Endothelial cell of umbilical vein (primary cell): ENCODE measurements at regions of chr1 and their contacts with region 1.

Region 1: GRCh38 chr1:234722904-234723720 is 113.1 kb upstream of the IRF2BP2 start:
- DNase-seq: peak; percentile 21
- H3K4me3 ChIP-seq: peak overlapping the region in 1 of 3 experiments; percentile 8
- H3K27ac ChIP-seq: peak overlapping the region; percentile 91
- H3K4me1 ChIP-seq: peaks cover 82% of the 10 kb centered on the region
- H3K27me3 ChIP-seq: no peaks in the 10 kb centered on the region
- CTCF ChIP-seq: no peak
- POLR2A ChIP-seq: no peak

Region 2: GRCh38 chr1:234373959-234374254 is 349.2 kb before region 1 on chr1:
- CTCF ChIA-PET with region 1: no interaction called
- POLR2A ChIA-PET with region 1: no interaction called
- dilution Hi-C with region 1: no loop called
- intact Hi-C with region 1: no loop called
- DNase-seq: no peak
- H3K4me3 ChIP-seq: peak overlapping the region; percentile 83 to 86 (median 85)
- H3K27ac ChIP-seq: peak overlapping the region; percentile 86
- H3K4me1 ChIP-seq: peaks cover 16% of the 10 kb centered on the region
- H3K27me3 ChIP-seq: no peaks in the 10 kb centered on the region
- CTCF ChIP-seq: no peak
- POLR2A ChIP-seq: no peak

Region 3: GRCh38 chr1:234544087-234544579 is 179.0 kb before region 1 on chr1:
- CTCF ChIA-PET with region 1: no interaction called
- POLR2A ChIA-PET with region 1: no interaction called
- dilution Hi-C with region 1: no loop called
- intact Hi-C with region 1: loop called (anchors 2 kb)
- DNase-seq: peak; percentile 98
- H3K4me3 ChIP-seq: no peak overlapping the region
- H3K27ac ChIP-seq: peak overlapping the region; percentile 72
- H3K4me1 ChIP-seq: peaks cover 24% of the 10 kb centered on the region
- H3K27me3 ChIP-seq: no peaks in the 10 kb centered on the region
- CTCF ChIP-seq: no peak
- POLR2A ChIP-seq: no peak

Region 4: DNA sequence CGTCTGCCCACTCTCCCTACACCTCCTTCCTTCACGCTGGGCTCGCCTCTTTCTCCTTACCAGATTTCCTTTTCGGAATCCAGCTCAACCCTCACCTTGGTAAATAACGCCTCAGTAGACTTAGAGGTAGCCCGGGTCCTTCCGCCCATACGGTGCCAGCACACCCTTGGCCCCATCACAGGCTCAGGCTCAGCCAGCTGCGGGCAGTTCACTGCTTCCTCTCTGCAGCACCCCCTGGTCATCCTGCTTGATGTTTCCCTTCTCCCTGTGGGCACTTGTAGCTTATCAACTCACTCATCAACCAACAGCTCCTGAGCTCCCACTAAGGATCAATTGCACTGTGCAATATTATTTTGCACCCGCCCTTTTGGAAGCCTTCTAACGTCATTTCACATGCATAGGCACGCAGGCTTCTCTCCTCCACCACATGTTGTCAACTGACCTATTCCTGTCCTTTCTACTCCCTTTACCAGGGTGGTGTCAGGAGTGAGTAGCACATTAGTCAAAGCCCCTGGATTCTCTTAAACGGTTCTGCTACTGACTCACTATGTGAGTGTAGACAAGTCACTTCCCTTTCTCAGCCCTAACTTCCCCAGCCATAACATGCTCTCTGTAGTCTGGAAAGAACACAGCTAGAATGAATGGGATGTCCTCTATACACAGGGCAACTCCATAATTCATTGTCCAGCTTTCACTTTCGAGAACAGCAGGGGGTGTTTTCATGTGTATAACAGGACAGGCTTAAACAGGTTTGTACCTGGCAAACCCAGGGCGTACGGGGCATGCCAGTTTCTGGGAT is 66.1 kb before region 1 on chr1:
- CTCF ChIA-PET with region 1: interaction called, 8 read pairs
- POLR2A ChIA-PET with region 1: interaction called, 3 read pairs
- dilution Hi-C with region 1: no loop called
- intact Hi-C with region 1: loop called (anchors 1 kb)
- DNase-seq: peak; percentile 92
- H3K4me3 ChIP-seq: no peak overlapping the region
- H3K27ac ChIP-seq: peak overlapping the region; percentile 82
- H3K4me1 ChIP-seq: peaks cover 33% of the 10 kb centered on the region
- H3K27me3 ChIP-seq: no peaks in the 10 kb centered on the region
- CTCF ChIP-seq: no peak
- POLR2A ChIP-seq: no peak

Region 5: GRCh38 chr1:234862944-234863515 is 139.9 kb after region 1 on chr1:
- CTCF ChIA-PET with region 1: interaction called, 4 read pairs
- POLR2A ChIA-PET with region 1: interaction called, 3 read pairs
- dilution Hi-C with region 1: no loop called
- intact Hi-C with region 1: loop called (anchors 1 kb)
- DNase-seq: peak; percentile 96
- H3K4me3 ChIP-seq: no peak overlapping the region
- H3K27ac ChIP-seq: peak overlapping the region; percentile 85
- H3K4me1 ChIP-seq: peaks cover 46% of the 10 kb centered on the region
- H3K27me3 ChIP-seq: no peaks in the 10 kb centered on the region
- CTCF ChIP-seq: no peak
- POLR2A ChIP-seq: no peak

Region 6: GRCh38 chr1:234962340-234962989 is 239.4 kb after region 1 on chr1:
- CTCF ChIA-PET with region 1: no interaction called
- POLR2A ChIA-PET with region 1: no interaction called
- dilution Hi-C with region 1: no loop called
- intact Hi-C with region 1: loop called (anchors 1 kb)
- DNase-seq: no peak
- H3K4me3 ChIP-seq: no peak overlapping the region
- H3K27ac ChIP-seq: peak overlapping the region; percentile 3
- H3K4me1 ChIP-seq: peaks cover 34% of the 10 kb centered on the region
- H3K27me3 ChIP-seq: no peaks in the 10 kb centered on the region
- CTCF ChIP-seq: no peak
- POLR2A ChIP-seq: no peak

Region 7: GRCh38 chr1:235050911-235051360 is 327.8 kb after region 1 on chr1:
- CTCF ChIA-PET with region 1: no interaction called
- POLR2A ChIA-PET with region 1: interaction called, 10 read pairs
- dilution Hi-C with region 1: no loop called
- intact Hi-C with region 1: no loop called
- DNase-seq: peak; percentile 18
- H3K4me3 ChIP-seq: no peak overlapping the region
- H3K27ac ChIP-seq: no peak overlapping the region
- H3K4me1 ChIP-seq: peaks cover 14% of the 10 kb centered on the region
- H3K27me3 ChIP-seq: no peaks in the 10 kb centered on the region
- CTCF ChIP-seq: no peak
- POLR2A ChIP-seq: no peak